ENCODE measurements at regions of chr2 and their contacts with region 1.

Region 1: DNA sequence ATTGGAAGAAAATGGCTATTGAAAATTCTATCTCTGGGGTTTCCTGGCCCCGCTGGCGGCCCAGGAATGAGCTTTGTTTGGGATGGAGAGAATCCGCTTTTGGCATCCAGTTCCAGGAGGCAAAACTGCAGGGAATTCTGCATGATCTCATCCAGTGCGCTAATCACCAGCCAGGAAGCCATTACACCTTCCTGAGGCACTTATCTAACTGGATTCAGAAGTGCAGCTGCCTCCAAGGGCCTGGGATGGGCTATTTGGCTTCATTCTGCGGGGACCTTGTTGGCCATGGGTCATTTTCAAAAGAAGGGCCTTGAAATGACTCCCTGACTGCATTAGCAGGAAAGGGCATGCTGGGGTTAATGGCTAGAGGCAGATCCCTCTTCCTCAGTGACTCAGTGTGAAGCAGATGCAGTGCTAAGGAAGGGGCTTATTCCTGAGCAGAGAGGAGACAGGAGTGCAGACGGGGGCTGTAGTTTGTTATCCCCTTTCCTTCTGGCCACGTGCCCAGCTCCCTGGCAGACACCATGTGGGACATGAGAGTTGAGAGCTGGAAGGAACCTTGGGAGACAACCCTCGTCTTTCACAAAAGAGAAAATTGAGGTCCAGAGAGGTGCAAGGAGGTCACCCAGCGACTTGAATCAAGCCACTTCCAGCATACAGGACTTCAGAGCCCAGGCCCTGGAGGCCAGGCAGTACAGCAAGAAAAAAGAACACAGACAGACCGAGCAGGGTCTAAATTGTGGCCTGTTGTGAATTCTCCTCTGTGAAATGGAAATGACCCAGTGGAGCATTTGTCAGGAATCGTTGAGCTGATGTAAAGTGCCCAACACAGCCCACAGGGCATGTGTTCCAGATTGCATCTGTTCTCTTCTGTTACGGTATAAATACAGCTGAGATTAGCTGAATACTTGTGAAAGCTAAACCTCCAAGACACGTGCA is 161.8 kb downstream of the PRKCE start:
- DNase-seq: peak; percentile 98
- H3K4me3 ChIP-seq: no peak overlapping the region
- H3K27ac ChIP-seq: peak overlapping the region; percentile 92
- H3K4me1 ChIP-seq: peaks cover 39% of the 10 kb centered on the region
- H3K27me3 ChIP-seq: no peaks in the 10 kb centered on the region
- CTCF ChIP-seq: no peak
- POLR2A ChIP-seq: no peak

Region 2: GRCh38 chr2:45616662-45617411 is 196.4 kb before region 1 on chr2:
- CTCF ChIA-PET with region 1: no interaction called
- POLR2A ChIA-PET with region 1: no interaction called
- dilution Hi-C with region 1: no loop called
- intact Hi-C with region 1: no loop called
- DNase-seq: peak; percentile 37
- H3K4me3 ChIP-seq: no peak overlapping the region
- H3K27ac ChIP-seq: no peak overlapping the region
- H3K4me1 ChIP-seq: peaks cover 28% of the 10 kb centered on the region
- H3K27me3 ChIP-seq: no peaks in the 10 kb centered on the region
- CTCF ChIP-seq: no peak
- POLR2A ChIP-seq: no peak

Region 3: GRCh38 chr2:45724335-45724734 is 88.9 kb before region 1 on chr2:
- CTCF ChIA-PET with region 1: no interaction called
- POLR2A ChIA-PET with region 1: no interaction called
- dilution Hi-C with region 1: no loop called
- intact Hi-C with region 1: no loop called
- DNase-seq: no peak
- H3K4me3 ChIP-seq: no peak overlapping the region
- H3K27ac ChIP-seq: no peak overlapping the region
- H3K4me1 ChIP-seq: no peaks in the 10 kb centered on the region
- H3K27me3 ChIP-seq: no peaks in the 10 kb centered on the region
- CTCF ChIP-seq: no peak
- POLR2A ChIP-seq: no peak

Region 4: GRCh38 chr2:45794134-45794617 is 19.1 kb before region 1 on chr2:
- CTCF ChIA-PET with region 1: interaction called, 7 read pairs
- POLR2A ChIA-PET with region 1: interaction called, 3 read pairs
- dilution Hi-C with region 1: no loop called
- intact Hi-C with region 1: loop called (anchors 1 kb)
- DNase-seq: peak; percentile 61
- H3K4me3 ChIP-seq: peak overlapping the region in 1 of 3 experiments; percentile 20
- H3K27ac ChIP-seq: peak overlapping the region; percentile 41
- H3K4me1 ChIP-seq: peaks cover 43% of the 10 kb centered on the region
- H3K27me3 ChIP-seq: no peaks in the 10 kb centered on the region
- CTCF ChIP-seq: no peak
- POLR2A ChIP-seq: no peak

Region 5: GRCh38 chr2:45857867-45858520 is 44.7 kb after region 1 on chr2:
- CTCF ChIA-PET with region 1: no interaction called
- POLR2A ChIA-PET with region 1: no interaction called
- dilution Hi-C with region 1: no loop called
- intact Hi-C with region 1: loop called (anchors 5 kb)
- DNase-seq: no peak
- H3K4me3 ChIP-seq: no peak overlapping the region
- H3K27ac ChIP-seq: no peak overlapping the region
- H3K4me1 ChIP-seq: peaks cover 17% of the 10 kb centered on the region
- H3K27me3 ChIP-seq: no peaks in the 10 kb centered on the region
- CTCF ChIP-seq: no peak
- POLR2A ChIP-seq: no peak

Region 6: DNA sequence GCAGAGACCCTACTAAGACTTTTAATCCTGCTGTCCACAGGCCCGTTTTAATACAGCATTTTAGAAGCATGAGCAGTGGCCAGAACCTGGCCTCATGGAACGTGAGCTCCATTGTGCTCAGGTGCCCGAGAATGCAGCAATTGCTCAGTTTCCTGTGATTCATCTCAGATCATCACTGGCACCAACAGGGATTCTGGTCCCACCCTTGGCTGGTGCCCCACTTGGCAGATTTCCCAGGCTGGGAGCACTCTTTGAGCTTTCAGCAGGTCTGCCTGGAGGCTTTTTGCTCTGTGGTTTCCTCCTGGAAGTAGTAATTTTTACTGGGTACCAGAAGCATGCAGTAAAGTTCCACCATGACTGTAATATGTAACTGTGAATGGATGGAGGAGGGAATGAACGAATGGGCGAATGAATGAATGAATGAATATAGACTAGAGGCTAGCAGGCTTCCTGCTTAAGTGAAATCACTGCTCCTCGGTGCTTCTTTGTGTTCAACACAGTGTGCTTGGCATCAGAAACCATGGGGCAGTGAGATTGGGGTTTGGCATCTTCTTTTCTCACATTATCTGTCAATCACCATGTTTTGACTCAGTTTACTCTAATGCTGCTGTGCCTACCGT is 151.1 kb after region 1 on chr2:
- CTCF ChIA-PET with region 1: no interaction called
- POLR2A ChIA-PET with region 1: no interaction called
- dilution Hi-C with region 1: no loop called
- intact Hi-C with region 1: loop called (anchors 1 kb)
- DNase-seq: peak; percentile 95
- H3K4me3 ChIP-seq: peak overlapping the region in 1 of 3 experiments; percentile 3
- H3K27ac ChIP-seq: peak overlapping the region; percentile 80
- H3K4me1 ChIP-seq: peaks cover 37% of the 10 kb centered on the region
- H3K27me3 ChIP-seq: no peaks in the 10 kb centered on the region
- CTCF ChIP-seq: no peak
- POLR2A ChIP-seq: no peak